Activated CD4-positive, alpha-beta T cell treated with anti-CD3 and anti-CD28 coated beads, Interleukin-2, amount 10 ng/mL, durations not matched to agents 7 days and 5 days (primary cell): ENCODE measurements at regions of chr7 and their contacts with region 1.

Region 1: GRCh38 chr7:105191331-105191730 is 177.3 kb downstream of the KMT2E start:
- DNase-seq: no peak
- H3K4me3 Mint-ChIP-seq: no peak overlapping the region
- H3K27ac Mint-ChIP-seq: no peak overlapping the region
- H3K4me1 Mint-ChIP-seq: peaks cover 3% of the 10 kb centered on the region
- H3K27me3 Mint-ChIP-seq: no peaks in the 10 kb centered on the region

Region 2: GRCh38 chr7:105112440-105113418 is 78.6 kb before region 1 on chr7:
- CTCF ChIA-PET with region 1: no interaction called
- POLR2A ChIA-PET with region 1: no interaction called
- DNase-seq: no peak
- H3K4me3 Mint-ChIP-seq: no peak overlapping the region
- H3K27ac Mint-ChIP-seq: no peak overlapping the region
- H3K4me1 Mint-ChIP-seq: peaks cover 9% of the 10 kb centered on the region
- H3K27me3 Mint-ChIP-seq: no peaks in the 10 kb centered on the region

Region 3: DNA sequence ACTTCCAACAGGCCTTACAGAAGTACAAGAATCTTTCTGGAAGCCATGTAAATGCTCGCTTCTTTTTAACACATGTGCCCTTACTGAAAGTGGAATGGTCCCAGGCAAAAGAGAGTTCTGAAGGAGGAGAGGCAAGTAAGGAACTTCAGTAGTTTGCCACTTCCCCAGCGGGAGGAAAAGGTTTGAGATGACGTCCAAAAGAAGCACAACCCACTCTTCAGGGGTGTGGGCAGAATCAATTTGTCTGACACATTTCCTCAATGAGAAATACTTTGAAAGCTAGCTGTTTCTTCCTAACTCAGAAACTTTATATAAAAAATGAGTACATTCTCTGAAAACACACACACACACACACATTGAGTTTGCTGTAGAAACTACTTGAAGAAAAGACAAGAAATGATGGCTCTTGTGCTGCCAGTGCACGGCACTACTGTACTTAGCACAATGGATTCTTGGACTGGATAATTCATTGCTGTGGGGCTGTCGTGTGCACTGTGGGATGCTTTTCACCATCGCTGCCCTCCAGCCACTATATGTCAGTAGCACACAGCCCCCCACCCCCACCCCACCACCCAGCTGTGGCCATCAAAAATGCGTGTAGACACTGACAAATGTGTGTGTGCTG is 14.4 kb after region 1 on chr7:
- CTCF ChIA-PET with region 1: interaction called, 11 read pairs
- POLR2A ChIA-PET with region 1: no interaction called
- DNase-seq: peak; percentile 38
- H3K4me3 Mint-ChIP-seq: no peak overlapping the region
- H3K27ac Mint-ChIP-seq: peak overlapping the region; percentile 59
- H3K4me1 Mint-ChIP-seq: peaks cover 60% of the 10 kb centered on the region
- H3K27me3 Mint-ChIP-seq: no peaks in the 10 kb centered on the region